Ascending aorta (tissue), 2 donors: ENCODE measurements at regions of chr10 and their contacts with region 1.

Region 1: DNA sequence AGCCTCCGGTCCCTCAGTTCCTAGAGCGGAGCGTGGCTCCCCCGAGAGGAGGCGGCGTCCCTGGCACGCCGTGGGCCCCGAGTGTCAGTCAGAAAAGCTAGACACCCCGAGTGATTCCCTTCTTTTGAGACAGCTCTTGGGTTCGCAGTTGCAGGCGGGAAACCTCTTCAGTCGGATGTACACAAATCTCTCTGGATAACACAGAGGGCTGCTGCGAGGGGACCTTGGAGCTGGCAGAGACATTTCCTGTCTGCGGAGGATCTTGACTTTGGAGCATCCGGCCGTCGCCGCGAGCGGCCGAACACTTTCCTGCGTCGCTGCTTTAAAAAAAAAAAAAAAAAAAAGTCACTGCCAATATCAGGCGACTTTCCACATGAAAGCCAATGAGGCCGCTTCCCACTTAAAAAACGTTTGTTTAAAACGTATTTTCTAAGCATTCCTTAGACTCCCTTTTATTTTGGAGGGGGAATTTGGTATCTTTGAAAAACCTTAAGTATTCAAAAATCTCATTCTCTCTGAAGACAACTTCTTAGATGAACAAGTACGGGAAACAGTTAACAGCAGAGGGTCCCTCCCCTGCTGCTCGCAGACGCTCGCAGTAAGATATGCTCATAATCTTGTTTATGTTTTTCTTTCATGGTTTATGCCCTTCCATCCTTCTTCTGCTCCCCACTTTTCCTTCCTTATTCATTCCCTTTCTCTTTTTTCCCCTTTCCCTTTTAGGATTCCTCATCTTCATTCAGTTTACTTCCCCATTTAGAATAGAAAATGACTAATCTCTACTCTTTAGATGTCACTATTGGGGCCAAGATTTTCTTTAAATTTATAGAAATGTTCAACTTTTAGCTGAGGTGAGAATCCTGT is 10.0 kb downstream of the HHEX start:
- DNase-seq: no peak
- H3K4me3 ChIP-seq: peak overlapping the region; percentile 49 to 66
- H3K27ac ChIP-seq: peak overlapping the region; percentile 51 to 64
- H3K4me1 ChIP-seq: peaks cover 0 to 4% of the 10 kb centered on the region in 2 donors
- H3K27me3 ChIP-seq: no peaks in the 10 kb centered on the region
- CTCF ChIP-seq: no peak

Region 2: DNA sequence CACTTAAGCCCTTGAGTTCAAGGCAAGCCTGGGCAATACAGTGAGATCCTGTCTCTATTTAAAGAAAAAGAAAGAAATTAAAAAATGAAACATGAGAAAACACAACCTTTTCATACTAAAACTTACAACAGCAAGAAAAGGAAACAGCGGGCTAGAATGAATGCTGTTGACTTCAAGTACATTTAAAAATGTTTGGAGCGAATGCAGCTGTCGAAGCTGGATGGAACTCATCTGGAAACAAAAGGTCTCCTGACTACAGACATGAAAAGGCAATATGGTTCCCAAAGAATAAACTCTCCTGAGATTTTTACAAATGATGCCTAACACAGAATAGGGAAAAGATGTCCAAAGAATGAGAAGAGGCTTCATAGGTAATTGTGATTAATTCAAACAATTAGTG is 205.2 kb before region 1 on chr10:
- intact Hi-C with region 1: no loop called
- DNase-seq: no peak
- H3K4me3 ChIP-seq: no peak overlapping the region
- H3K27ac ChIP-seq: no peak overlapping the region
- H3K4me1 ChIP-seq: no peaks in the 10 kb centered on the region
- H3K27me3 ChIP-seq: no peaks in the 10 kb centered on the region
- CTCF ChIP-seq: no peak

Region 3: GRCh38 chr10:92592761-92593618 is 106.8 kb before region 1 on chr10 and contains the start of gene KIF11:
- intact Hi-C with region 1: loop called (anchors 5 kb)
- DNase-seq: peak; percentile 94 to 99
- H3K4me3 ChIP-seq: peak within 1 kb of the TSS; percentile 58 to 70
- H3K27ac ChIP-seq: peak within 1 kb of the TSS; percentile 92 to 96
- H3K4me1 ChIP-seq: peaks cover 4 to 5% of the 10 kb centered on the region in 2 donors
- H3K27me3 ChIP-seq: no peaks in the 10 kb centered on the region
- CTCF ChIP-seq: no peak
- total RNA-seq, gene KIF11: not detected

Region 4: GRCh38 chr10:92822060-92822634 is 122.4 kb after region 1 on chr10:
- intact Hi-C with region 1: no loop called
- DNase-seq: no peak
- H3K4me3 ChIP-seq: no peak overlapping the region
- H3K27ac ChIP-seq: peak overlapping the region; percentile 28 to 58
- H3K4me1 ChIP-seq: peaks cover 0 to 3% of the 10 kb centered on the region in 2 donors
- H3K27me3 ChIP-seq: no peaks in the 10 kb centered on the region
- CTCF ChIP-seq: no peak

Region 5: GRCh38 chr10:92848441-92849233 is 148.9 kb after region 1 on chr10 and contains the start of gene EXOC6:
- intact Hi-C with region 1: loop called (anchors 5 kb)
- DNase-seq: peak in 1 of 2 donors; percentile 80
- H3K4me3 ChIP-seq: peak within 1 kb of the TSS; percentile 93 to 94
- H3K27ac ChIP-seq: peak within 1 kb of the TSS; percentile 52 to 85
- H3K4me1 ChIP-seq: peaks cover 0 to 6% of the 10 kb centered on the region in 2 donors
- H3K27me3 ChIP-seq: no peaks in the 10 kb centered on the region
- CTCF ChIP-seq: peak in 1 of 3 experiments; percentile 13
- total RNA-seq, gene EXOC6: 12.2 TPM